ENCODE measurements at regions of chr10 and their contacts with region 1.

Region 1: DNA sequence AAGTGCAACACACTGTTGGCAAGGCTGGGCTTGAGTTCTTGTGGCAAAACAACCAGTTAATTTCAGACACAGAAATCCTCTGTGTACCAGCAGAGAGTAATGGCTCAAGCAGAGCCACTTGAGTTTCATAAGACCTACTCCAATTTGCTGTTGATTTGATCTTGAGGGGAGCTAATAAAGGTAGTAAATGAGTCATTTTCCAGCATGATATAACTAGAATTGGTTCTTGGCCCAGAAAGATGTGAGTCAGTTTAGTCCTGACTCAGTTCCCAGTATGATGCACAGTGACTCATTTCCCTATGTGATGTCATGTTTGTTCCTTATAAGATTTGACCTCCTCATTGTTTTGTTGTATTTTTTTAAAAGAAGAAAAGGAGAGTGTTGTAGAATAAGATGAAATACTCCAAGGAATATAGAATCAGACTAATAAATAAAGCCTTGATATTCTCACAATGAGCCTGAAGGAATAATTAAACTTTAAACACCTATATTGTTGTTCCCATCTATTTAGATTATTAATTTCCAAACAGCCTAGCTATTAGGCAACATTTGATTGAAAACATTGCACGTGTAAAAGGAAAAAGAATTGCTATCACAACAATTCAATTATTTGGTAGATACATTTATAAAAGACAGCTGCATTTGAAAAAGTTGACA is 186.2 kb downstream of the REEP3 start:
- DNase-seq: peak; percentile 39
- ATAC-seq: peak; percentile 94
- H3K4me3 Mint-ChIP-seq: no peak overlapping the region
- H3K27ac Mint-ChIP-seq: no peak overlapping the region
- H3K4me1 Mint-ChIP-seq: peaks cover 19% of the 10 kb centered on the region
- H3K27me3 Mint-ChIP-seq: no peaks in the 10 kb centered on the region

Region 2: GRCh38 chr10:63133056-63133820 is 574.1 kb before region 1 on chr10 and contains the start of gene NRBF2:
- CTCF ChIA-PET with region 1: interaction called, 3 read pairs
- POLR2A ChIA-PET with region 1: no interaction called
- intact Hi-C with region 1: loop called in 1 of 2 experiments (anchors 1 kb)
- DNase-seq: peak; percentile 99
- ATAC-seq: peak; percentile 90
- H3K4me3 Mint-ChIP-seq: peak within 1 kb of the TSS; percentile 81
- H3K27ac Mint-ChIP-seq: peak within 1 kb of the TSS; percentile 92
- H3K4me1 Mint-ChIP-seq: peaks cover 46% of the 10 kb centered on the region
- H3K27me3 Mint-ChIP-seq: no peaks in the 10 kb centered on the region
- total RNA-seq, gene NRBF2: 23.9 to 24.1 TPM

Region 3: GRCh38 chr10:63173468-63174232 is 533.7 kb before region 1 on chr10:
- CTCF ChIA-PET with region 1: interaction called, 3 read pairs
- POLR2A ChIA-PET with region 1: no interaction called
- intact Hi-C with region 1: loop called (anchors 1 kb)
- DNase-seq: no peak
- ATAC-seq: peak; percentile 96
- H3K4me3 Mint-ChIP-seq: no peak overlapping the region
- H3K27ac Mint-ChIP-seq: peak overlapping the region; percentile 72
- H3K4me1 Mint-ChIP-seq: peaks cover 52% of the 10 kb centered on the region
- H3K27me3 Mint-ChIP-seq: no peaks in the 10 kb centered on the region

Region 4: DNA sequence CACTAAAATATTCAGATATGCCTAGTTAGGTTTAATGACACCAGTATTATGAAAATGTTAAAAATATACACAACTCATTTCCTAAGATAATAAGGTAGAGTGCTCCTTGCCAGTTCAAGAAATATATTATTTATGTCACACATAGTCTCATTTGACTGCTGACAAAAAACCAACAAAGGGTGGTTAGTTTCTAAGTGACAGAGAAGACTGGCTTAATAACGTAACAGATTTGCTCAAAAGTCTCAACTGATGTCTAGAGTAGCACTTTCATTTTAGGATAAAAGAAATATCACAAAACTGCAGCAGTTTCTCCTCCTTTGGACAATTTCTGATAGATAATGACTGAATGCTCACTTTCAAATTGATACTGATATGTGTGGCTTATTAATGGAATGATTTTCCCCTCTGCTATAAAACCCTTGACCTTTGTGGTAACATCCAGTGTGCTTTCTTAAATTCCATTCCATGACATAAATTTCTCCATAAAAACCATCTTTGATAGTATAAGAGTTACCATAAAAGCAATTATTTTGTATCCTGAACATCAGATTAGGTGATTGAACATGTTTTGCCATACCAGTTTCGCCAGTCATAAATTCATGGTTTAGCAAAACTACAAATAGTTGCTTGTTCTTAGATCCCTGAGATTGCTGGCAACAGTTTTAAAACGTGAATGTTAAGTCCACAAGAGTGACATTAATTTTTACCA is 480.0 kb before region 1 on chr10:
- CTCF ChIA-PET with region 1: no interaction called
- POLR2A ChIA-PET with region 1: no interaction called
- intact Hi-C with region 1: loop called in 1 of 2 experiments (anchors 5 kb)
- DNase-seq: no peak
- ATAC-seq: peak; percentile 45
- H3K4me3 Mint-ChIP-seq: peak overlapping the region; percentile 52
- H3K27ac Mint-ChIP-seq: peak overlapping the region; percentile 88
- H3K4me1 Mint-ChIP-seq: peaks cover 53% of the 10 kb centered on the region
- H3K27me3 Mint-ChIP-seq: no peaks in the 10 kb centered on the region

Region 5: GRCh38 chr10:63409465-63410027 is 297.8 kb before region 1 on chr10:
- CTCF ChIA-PET with region 1: no interaction called
- POLR2A ChIA-PET with region 1: no interaction called
- intact Hi-C with region 1: no loop called
- DNase-seq: no peak
- ATAC-seq: no peak
- H3K4me3 Mint-ChIP-seq: no peak overlapping the region
- H3K27ac Mint-ChIP-seq: no peak overlapping the region
- H3K4me1 Mint-ChIP-seq: peaks cover 22% of the 10 kb centered on the region
- H3K27me3 Mint-ChIP-seq: no peaks in the 10 kb centered on the region

Region 6: DNA sequence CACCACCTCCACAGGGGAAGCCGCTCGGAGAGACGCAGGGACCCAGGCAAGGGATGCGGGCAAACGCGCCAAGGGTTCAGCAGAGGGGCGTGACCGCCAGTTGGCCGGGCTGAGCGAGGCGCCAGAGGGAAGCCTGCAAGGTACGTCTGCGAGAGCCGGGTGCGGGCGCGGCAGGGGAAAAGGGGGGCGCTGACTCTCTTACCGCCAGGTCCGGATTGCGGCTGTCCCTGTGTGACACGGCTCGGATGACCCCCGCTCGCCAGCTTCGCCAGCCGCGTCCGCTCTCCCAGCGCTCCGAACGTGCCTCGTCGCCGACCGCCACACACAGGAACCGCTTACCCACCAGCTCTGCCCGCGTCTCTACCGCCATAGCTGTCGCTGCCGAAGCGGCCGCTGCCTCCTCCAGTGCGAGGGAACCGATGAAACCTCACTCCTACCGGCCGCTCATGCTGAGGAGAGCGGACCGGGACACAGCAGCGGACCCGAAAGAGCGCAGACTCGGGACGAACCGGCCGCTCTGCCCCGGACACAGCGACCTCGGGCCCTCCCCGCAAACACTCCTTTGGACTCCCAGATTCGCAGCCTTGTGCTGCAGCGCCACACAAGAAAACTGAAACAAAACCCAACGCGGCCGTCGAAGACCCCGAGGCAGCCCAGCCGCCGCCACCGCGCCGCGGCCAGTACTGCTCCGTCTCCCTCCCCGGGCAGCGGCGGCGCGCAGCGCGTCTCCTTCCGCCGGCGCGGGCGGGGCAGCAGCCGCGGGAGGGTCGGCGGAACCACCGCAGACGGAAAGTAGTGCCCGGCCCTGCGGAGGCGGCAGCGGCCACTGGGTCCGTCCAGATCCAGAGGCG is 241.9 kb before region 1 on chr10 and contains the start of gene JMJD1C:
- CTCF ChIA-PET with region 1: interaction called, 3 read pairs
- POLR2A ChIA-PET with region 1: no interaction called
- intact Hi-C with region 1: loop called in 1 of 2 experiments (anchors 1 kb)
- DNase-seq: peak; percentile 76
- ATAC-seq: peak; percentile 73
- H3K4me3 Mint-ChIP-seq: peak within 1 kb of the TSS; percentile 94
- H3K27ac Mint-ChIP-seq: peak within 1 kb of the TSS; percentile 72
- H3K4me1 Mint-ChIP-seq: peaks cover 23% of the 10 kb centered on the region
- H3K27me3 Mint-ChIP-seq: no peaks in the 10 kb centered on the region
- total RNA-seq, gene JMJD1C: 41.5 to 42.5 TPM

Region 7: DNA sequence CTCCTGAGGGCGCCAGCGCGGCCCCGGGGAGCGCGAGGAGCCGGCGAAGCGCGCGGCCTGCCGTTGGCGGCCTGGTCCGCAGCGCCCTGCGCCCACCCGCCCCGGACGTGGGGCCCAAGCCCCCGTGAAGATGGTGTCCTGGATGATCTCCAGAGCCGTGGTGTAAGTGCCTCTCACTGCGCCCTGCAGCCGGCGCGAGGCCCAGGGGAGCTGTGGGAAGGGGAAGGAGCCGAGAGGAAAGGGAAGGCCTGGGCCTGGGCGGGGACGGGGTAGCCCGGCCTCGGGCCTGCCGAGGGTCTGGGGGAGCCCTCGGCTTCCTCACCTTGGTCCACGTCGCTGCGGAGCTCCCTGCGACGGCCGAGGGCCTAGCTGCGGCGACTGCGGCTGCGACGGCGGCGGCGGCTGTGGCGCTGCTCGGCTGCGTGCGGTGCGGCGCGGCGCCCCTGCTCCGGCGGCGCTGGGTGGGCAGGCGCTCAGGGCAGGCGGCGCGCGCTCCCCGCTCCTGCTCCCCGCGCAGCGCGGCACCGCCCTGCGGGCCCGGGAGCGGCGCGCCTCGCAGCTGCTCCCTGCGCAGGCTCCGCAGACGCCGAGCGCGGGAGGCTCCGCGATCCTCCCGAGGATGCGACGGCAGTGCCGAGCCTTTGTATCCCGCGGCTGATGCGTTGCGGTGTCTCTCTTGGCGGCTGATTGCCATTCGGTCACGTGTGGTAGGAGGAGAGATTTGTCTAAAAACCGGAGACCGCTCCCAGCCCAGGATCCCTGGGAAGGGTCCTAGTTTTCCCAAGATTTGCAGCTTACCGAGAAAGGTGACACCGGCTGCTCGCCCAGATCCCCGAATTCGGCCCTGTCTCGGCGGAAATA is 185.7 kb before region 1 on chr10:
- CTCF ChIA-PET with region 1: no interaction called
- POLR2A ChIA-PET with region 1: no interaction called
- intact Hi-C with region 1: loop called (anchors 5 kb)
- DNase-seq: peak; percentile 75
- ATAC-seq: peak; percentile 72
- H3K4me3 Mint-ChIP-seq: peak overlapping the region; percentile 86
- H3K27ac Mint-ChIP-seq: peak overlapping the region; percentile 94
- H3K4me1 Mint-ChIP-seq: peaks cover 57% of the 10 kb centered on the region
- H3K27me3 Mint-ChIP-seq: no peaks in the 10 kb centered on the region

Measured in activated CD4-positive, alpha-beta T cell treated with anti-CD3 and anti-CD28 coated beads for 36 hours (primary cell).